ENCODE measurements at regions of chr4 and their contacts with region 1.

Region 1: DNA sequence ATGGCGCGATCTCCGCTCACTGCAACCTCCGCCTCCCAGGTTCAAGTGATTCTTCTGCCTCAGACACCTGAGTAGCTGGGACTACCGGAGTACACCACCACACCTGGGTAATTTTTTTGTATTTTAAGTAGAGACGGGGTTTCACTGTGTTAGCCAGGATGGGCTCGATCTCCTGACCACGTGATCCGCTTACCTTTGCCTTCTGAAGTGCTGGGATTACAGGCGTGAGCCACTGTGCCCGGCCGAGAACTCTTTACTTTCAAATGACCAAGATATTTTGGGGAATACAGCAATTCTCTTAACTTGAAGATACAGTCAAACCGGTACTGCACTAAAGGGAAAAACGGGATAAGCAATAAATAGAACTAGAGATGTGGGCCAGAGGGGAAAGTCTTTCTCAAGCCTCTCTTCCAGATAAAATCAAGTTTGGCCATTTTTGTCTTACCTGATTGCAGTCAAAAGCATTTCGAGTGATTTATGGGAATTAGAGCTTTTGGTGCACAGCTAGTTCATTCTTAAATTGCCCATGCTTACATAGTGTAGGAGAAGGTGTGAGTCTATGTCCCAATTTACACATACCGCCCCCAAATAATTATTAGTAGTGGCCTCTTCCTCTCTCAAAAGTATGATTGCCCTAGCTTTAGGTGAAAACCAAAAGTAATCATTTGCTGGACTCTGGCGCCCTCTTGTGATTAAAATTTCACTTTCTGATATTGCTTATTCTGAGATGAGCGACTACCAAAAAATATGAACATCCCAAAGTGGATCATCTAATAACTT is 53.2 kb upstream of the ABCG2 start:
- DNase-seq: peak in 3 of 5 donors; percentile 46 to 74 (median 70)
- H3K4me3 ChIP-seq: peak overlapping the region in 1 of 3 donors; percentile 26
- H3K27ac ChIP-seq: no peak overlapping the region
- H3K4me1 ChIP-seq: no peaks in the 10 kb centered on the region
- H3K27me3 ChIP-seq: no peaks in the 10 kb centered on the region
- CTCF ChIP-seq: peak; percentile 64

Region 2: GRCh38 chr4:87856816-87857215 is 354.8 kb before region 1 on chr4:
- intact Hi-C with region 1: loop called (anchors 5 kb)
- DNase-seq: no peak
- H3K4me3 ChIP-seq: no peak overlapping the region
- H3K27ac ChIP-seq: peak overlapping the region in 1 of 2 donors; percentile 42
- H3K4me1 ChIP-seq: peaks cover 0 to 16% (median 5%) of the 10 kb centered on the region in 3 donors
- H3K27me3 ChIP-seq: no peaks in the 10 kb centered on the region
- CTCF ChIP-seq: no peak

Region 3: DNA sequence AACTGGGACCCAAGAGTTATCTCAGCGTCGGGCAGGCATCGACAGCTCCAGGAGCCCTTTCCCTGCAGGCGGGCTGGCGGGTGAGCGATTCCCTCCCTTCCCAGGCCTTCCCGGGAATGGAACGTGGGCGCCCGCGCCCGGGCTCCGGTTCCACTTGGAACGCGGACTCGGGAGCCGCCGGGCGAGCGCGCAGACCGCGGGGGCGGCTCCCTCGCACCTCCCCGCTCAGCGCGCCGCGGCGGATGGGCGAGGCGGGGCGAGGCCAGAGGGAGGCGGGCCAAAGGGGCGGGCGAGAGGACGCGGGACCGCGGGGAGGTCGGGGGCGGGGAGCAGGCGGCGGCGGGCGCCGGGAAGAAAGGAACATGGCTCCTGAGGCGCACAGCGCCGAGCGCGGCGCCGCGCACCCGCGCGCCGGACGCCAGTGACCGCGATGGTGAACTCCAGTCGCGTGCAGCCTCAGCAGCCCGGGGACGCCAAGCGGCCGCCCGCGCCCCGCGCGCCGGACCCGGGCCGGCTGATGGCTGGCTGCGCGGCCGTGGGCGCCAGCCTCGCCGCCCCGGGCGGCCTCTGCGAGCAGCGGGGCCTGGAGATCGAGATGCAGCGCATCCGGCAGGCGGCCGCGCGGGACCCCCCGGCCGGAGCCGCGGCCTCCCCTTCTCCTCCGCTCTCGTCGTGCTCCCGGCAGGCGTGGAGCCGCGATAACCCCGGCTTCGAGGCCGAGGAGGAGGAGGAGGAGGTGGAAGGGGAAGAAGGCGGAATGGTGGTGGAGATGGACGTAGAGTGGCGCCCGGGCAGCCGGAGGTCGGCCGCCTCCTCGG is 204.2 kb before region 1 on chr4 and contains the start of gene PKD2:
- intact Hi-C with region 1: no loop called
- DNase-seq: peak; percentile 83 to 96 (median 87)
- H3K4me3 ChIP-seq: peak within 1 kb of the TSS; percentile 70 to 87 (median 84)
- H3K27ac ChIP-seq: peak within 1 kb of the TSS; percentile 79 to 81
- H3K4me1 ChIP-seq: peaks cover 5 to 15% (median 9%) of the 10 kb centered on the region in 3 donors
- H3K27me3 ChIP-seq: no peaks in the 10 kb centered on the region
- CTCF ChIP-seq: no peak
- total RNA-seq, gene PKD2: 92.6 TPM

Region 4: DNA sequence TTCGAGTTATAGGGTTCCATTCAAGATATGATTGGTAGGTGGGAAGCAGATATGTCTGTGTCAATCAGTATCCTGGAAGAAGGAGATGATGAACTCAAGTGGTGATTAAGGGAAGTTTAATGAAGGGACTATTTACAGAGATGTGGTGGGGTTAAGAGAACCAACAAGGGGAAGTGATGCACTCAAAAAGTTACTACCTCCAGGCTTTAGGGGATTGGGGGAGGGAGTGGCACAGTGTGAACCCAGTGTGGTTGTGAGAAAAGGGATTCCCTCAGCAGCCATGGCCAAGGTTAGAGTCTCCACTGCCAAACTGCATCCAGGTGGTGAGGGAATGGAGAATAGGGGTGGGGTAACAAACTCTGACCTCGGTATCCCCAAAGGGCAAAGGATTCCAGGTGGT is 176.4 kb before region 1 on chr4:
- intact Hi-C with region 1: loop called (anchors 5 kb)
- DNase-seq: no peak
- H3K4me3 ChIP-seq: no peak overlapping the region
- H3K27ac ChIP-seq: no peak overlapping the region
- H3K4me1 ChIP-seq: no peaks in the 10 kb centered on the region
- H3K27me3 ChIP-seq: no peaks in the 10 kb centered on the region
- CTCF ChIP-seq: no peak

Region 5: DNA sequence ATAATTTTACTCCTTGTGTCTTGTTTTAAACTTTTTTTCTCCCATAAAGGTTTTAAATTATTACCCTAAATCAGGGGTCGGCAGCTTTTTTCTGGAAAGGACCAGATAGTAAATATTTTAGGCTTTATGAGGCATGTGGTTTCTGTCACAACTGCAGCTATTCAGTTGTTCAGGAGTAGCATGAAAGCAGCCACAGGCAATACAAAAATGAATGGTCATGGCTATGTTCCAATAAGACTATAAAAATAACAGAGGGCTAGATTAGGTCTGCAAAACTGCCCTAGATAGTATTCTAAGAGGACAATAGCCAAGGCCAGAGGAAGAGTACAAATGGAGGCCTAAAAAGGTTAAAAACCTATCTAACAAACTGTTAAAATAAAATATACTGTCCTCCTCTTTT is 269.9 kb after region 1 on chr4:
- intact Hi-C with region 1: no loop called
- DNase-seq: peak in 2 of 5 donors; percentile 36 to 57
- H3K4me3 ChIP-seq: no peak overlapping the region
- H3K27ac ChIP-seq: no peak overlapping the region
- H3K4me1 ChIP-seq: no peaks in the 10 kb centered on the region
- H3K27me3 ChIP-seq: no peaks in the 10 kb centered on the region
- CTCF ChIP-seq: no peak

Region 6: GRCh38 chr4:88514557-88515511 is 303.2 kb after region 1 on chr4:
- intact Hi-C with region 1: loop called (anchors 5 kb)
- DNase-seq: no peak
- H3K4me3 ChIP-seq: no peak overlapping the region
- H3K27ac ChIP-seq: no peak overlapping the region
- H3K4me1 ChIP-seq: no peaks in the 10 kb centered on the region
- H3K27me3 ChIP-seq: no peaks in the 10 kb centered on the region
- CTCF ChIP-seq: no peak